T-cell (primary cell): ENCODE measurements at regions of chr6 and their contacts with region 1.

Region 1: GRCh38 chr6:127516666-127517273 is 2.4 kb downstream of the MTCL3 start:
- DNase-seq: peak in 21 of 35 experiments; percentile 11 to 68 (median 28)
- ATAC-seq: peak; percentile 35 to 44 (median 40)
- H3K4me3 ChIP-seq: peak overlapping the region; percentile 48 to 56
- H3K4me3 Mint-ChIP-seq: peak overlapping the region; percentile 87 to 96 (median 88)
- H3K27ac ChIP-seq: no peak overlapping the region
- H3K27ac Mint-ChIP-seq: peak overlapping the region; percentile 55 to 61
- H3K4me1 ChIP-seq: peaks cover 7 to 35% of the 10 kb centered on the region in 2 experiments
- H3K4me1 Mint-ChIP-seq: peaks cover 33 to 45% (median 38%) of the 10 kb centered on the region in 3 donors
- H3K27me3 ChIP-seq: peaks cover 17 to 21% of the 10 kb centered on the region in 2 experiments
- H3K27me3 Mint-ChIP-seq: peaks cover 26 to 34% of the 10 kb centered on the region in 2 donors

Region 2: DNA sequence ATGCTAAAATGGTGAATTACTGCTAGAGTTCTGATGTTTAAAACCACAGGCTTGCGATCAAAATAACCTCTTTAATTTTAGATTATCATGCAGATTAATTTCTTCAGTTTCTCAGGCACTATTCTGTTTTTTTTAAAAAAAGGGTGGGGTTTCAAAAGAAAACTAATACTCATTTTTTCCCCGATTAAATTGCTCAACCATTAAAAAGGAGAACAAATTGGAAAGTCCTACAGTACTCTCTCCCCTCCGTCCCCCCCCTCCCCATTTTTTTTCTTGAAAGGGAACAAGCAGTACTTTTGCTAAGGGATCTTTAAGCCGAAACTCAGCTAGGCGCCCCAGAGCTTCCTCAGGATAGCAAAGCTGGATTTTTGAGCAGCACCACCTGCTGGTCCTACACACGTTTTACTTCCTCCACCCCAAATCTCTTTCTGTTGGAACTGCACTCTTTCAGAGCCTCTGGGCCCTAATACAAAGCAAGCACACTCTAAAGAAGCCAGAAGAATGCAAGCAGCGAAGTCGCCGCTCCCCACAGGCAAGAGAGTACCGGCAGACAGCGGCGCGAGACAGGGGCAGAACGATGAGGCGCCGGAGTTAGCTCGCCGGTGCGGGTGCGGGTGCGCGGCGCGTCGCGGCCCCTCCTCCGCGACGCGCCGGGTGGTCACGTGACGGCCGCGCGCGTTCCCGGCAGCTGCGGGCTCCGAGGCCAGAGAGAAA is 250.4 kb before region 1 on chr6 and contains the start of gene RNF146:
- CTCF ChIA-PET with region 1: interaction called, 3 to 11 read pairs
- POLR2A ChIA-PET with region 1: no interaction called
- DNase-seq: peak; percentile 41 to 81 (median 63)
- ATAC-seq: peak; percentile 83 to 86 (median 84)
- H3K4me3 ChIP-seq: peak within 1 kb of the TSS; percentile 95 to 96
- H3K4me3 Mint-ChIP-seq: peak within 1 kb of the TSS; percentile 92 to 100 (median 93)
- H3K27ac ChIP-seq: peak within 1 kb of the TSS; percentile 97
- H3K27ac Mint-ChIP-seq: peak within 1 kb of the TSS; percentile 99 to 100
- H3K4me1 ChIP-seq: peaks cover 0 to 16% of the 10 kb centered on the region in 2 experiments
- H3K4me1 Mint-ChIP-seq: peaks cover 33 to 50% (median 41%) of the 10 kb centered on the region in 3 donors
- H3K27me3 ChIP-seq: no peaks in the 10 kb centered on the region
- H3K27me3 Mint-ChIP-seq: no peaks in the 10 kb centered on the region
- total RNA-seq, gene RNF146: 15.6 to 32.2 (median 31.3) TPM

Region 3: DNA sequence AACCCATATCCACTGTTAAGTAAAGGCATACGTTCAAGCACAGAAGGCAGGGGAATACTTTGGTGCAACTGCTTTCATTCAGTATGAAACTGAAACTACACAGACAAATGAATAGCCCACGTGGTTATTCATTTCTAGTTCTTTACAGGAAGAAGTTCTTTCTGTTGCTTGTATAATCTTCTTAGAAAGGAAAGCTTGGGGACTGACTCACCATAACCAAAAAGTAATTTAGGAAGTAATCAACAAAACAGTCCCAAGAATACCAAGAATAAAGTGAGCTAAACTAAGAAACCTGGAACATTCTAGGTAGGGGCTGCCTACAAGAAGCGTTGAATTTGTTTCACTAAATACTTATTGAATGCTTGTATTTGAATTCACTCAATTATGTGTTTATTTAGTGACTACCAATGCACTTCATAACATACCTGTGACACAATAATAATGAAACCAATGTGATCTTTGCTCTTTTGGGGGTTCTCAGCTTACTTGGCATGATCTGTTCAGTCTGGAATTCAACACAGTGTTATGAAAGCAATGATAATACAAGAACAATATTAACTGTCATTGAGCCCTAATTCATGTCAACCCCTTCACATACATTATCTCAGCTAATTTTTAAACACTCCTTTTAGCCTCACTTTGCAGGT is 32.4 kb before region 1 on chr6:
- CTCF ChIA-PET with region 1: interaction called, 17 to 22 read pairs
- POLR2A ChIA-PET with region 1: interaction called in 1 of 2 experiments, 3 read pairs
- DNase-seq: peak in 1 of 35 experiments; percentile 44
- ATAC-seq: peak; percentile 86 to 93 (median 90)
- H3K4me3 ChIP-seq: peak overlapping the region; percentile 8 to 23
- H3K4me3 Mint-ChIP-seq: peak overlapping the region; percentile 59 to 78 (median 62)
- H3K27ac ChIP-seq: peak overlapping the region; percentile 71
- H3K27ac Mint-ChIP-seq: peak overlapping the region; percentile 61 to 75
- H3K4me1 ChIP-seq: peaks cover 0 to 7% of the 10 kb centered on the region in 2 experiments
- H3K4me1 Mint-ChIP-seq: peaks cover 20 to 27% (median 24%) of the 10 kb centered on the region in 3 donors
- H3K27me3 ChIP-seq: no peaks in the 10 kb centered on the region
- H3K27me3 Mint-ChIP-seq: no peaks in the 10 kb centered on the region

Region 4: DNA sequence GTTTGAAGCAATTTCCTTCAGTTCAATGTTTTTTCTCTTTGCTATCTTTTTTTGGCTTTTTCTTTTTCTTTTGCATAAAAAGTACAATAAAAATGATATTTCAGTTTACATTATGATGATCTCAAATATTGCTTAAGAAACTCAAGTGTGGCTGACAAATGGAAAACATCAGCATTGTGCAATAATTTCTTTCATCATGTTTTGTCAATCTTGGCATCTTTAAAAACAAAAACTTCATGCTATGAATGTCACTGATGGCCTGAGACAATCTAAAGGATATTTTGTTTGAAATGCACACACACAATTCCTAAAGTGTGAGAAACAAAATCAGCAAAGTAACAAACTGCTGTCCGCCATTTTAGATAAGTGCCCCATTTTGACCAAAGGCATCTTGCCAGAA is 16.2 kb after region 1 on chr6:
- CTCF ChIA-PET with region 1: interaction called, 5 to 22 read pairs
- POLR2A ChIA-PET with region 1: interaction called in 1 of 2 experiments, 6 read pairs
- DNase-seq: no peak
- ATAC-seq: no peak
- H3K4me3 ChIP-seq: no peak overlapping the region
- H3K4me3 Mint-ChIP-seq: no peak overlapping the region
- H3K27ac ChIP-seq: no peak overlapping the region
- H3K27ac Mint-ChIP-seq: no peak overlapping the region
- H3K4me1 ChIP-seq: no peaks in the 10 kb centered on the region
- H3K4me1 Mint-ChIP-seq: no peaks in the 10 kb centered on the region
- H3K27me3 ChIP-seq: no peaks in the 10 kb centered on the region
- H3K27me3 Mint-ChIP-seq: peaks cover 8 to 25% of the 10 kb centered on the region in 2 donors

Region 5: GRCh38 chr6:127539272-127539671 is 22.5 kb after region 1 on chr6:
- CTCF ChIA-PET with region 1: interaction called, 3 to 22 read pairs
- POLR2A ChIA-PET with region 1: interaction called in 1 of 2 experiments, 6 read pairs
- DNase-seq: peak in 1 of 35 experiments; percentile 32
- ATAC-seq: peak in 1 of 4 experiments; percentile 62
- H3K4me3 ChIP-seq: no peak overlapping the region
- H3K4me3 Mint-ChIP-seq: no peak overlapping the region
- H3K27ac ChIP-seq: no peak overlapping the region
- H3K27ac Mint-ChIP-seq: no peak overlapping the region
- H3K4me1 ChIP-seq: no peaks in the 10 kb centered on the region
- H3K4me1 Mint-ChIP-seq: no peaks in the 10 kb centered on the region
- H3K27me3 ChIP-seq: no peaks in the 10 kb centered on the region
- H3K27me3 Mint-ChIP-seq: peaks cover 6 to 15% of the 10 kb centered on the region in 2 donors